Astrocyte of the cerebellum (primary cell): ENCODE measurements at regions of chrX and their contacts with region 1.

Region 1: GRCh38 chrX:16931371-16931770 is 15.1 kb upstream of the REPS2 start:
- DNase-seq: no peak
- H3K4me3 ChIP-seq: no peak overlapping the region
- CTCF ChIP-seq: no peak

Region 2: DNA sequence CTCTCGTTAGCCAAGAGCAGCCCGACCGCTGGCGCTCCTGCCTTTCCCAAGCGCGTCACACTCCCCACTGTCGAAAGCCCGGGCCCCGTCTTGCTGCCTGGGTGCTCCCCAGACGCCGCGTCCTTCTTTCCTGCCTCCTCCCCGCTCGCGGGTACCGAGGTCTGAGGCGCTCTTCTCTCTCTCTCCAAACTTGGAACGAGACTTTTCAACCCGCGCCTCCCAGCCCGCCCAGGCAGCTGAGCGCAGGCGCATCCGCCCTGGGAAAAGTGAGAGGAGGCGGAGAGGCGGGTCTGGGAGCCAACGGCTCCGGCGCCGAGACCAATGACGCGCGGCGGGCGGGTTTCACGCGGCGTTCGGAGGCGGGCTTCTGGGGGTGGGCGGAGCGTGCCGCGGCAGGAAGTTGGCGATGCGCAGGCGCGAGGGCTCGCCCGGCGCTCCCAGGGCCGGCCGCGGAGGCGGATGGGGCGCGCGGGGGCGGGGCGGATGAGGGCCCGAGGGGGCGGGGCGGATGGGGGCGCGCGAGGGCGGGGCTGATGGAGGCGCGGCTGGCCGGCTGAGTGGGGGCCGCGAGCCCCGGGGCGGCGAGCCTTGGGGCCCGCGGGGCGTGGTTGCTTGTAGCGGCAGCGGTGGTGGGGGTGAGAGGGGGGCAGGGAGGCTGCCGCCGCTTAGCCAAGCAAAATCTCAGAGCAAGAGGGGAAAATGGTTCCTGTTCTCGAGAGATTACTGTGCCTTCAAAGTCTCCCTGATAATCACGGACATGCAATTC is 61.1 kb before region 1 on chrX and contains the start of gene RBBP7:
- in situ Hi-C with region 1: no loop called
- DNase-seq: peak; percentile 80
- H3K4me3 ChIP-seq: peak within 1 kb of the TSS; percentile 74
- CTCF ChIP-seq: no peak

Region 3: DNA sequence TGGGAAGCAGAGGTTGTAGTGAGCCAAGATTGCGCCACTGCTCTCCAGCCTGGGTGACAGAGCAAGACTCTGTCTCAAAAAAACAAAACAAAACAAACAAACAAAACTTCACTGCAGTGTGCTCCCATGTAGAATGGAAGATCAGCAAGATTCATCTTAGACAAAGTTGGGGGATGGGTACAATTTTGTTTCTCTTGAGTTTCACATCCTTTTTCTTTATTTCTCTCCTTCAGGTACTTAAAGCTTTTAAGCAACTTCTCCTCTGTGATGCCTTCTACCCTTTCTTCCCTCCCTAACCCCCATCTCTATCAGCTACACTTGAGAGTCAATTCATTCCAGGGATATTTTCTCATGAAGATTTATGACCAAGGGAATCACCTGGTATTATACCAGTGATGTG is 45.7 kb before region 1 on chrX:
- in situ Hi-C with region 1: loop called (anchors 5 kb)
- DNase-seq: no peak
- H3K4me3 ChIP-seq: no peak overlapping the region
- CTCF ChIP-seq: no peak

Region 4: DNA sequence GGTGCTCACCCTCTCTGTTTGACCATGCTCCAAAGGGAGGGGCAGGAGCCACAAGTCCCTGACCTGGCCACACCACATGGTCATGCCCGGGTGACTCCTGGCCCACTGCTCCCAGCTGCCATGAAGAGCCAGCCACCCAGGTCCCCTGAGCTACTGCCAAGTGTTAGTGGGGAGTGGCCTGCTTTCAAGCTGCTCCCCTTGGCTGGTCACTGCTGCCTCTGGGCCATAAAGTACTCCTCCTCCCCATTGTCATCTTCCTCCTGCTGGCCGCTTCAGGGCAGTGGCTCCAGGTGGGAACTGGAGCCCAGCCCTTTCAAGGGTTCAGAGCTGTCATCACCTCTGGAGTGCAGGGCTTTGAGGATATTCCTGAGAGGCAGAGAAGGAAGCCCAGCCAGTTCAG is 33.9 kb before region 1 on chrX:
- in situ Hi-C with region 1: no loop called
- DNase-seq: no peak
- H3K4me3 ChIP-seq: no peak overlapping the region
- CTCF ChIP-seq: no peak

Region 5: DNA sequence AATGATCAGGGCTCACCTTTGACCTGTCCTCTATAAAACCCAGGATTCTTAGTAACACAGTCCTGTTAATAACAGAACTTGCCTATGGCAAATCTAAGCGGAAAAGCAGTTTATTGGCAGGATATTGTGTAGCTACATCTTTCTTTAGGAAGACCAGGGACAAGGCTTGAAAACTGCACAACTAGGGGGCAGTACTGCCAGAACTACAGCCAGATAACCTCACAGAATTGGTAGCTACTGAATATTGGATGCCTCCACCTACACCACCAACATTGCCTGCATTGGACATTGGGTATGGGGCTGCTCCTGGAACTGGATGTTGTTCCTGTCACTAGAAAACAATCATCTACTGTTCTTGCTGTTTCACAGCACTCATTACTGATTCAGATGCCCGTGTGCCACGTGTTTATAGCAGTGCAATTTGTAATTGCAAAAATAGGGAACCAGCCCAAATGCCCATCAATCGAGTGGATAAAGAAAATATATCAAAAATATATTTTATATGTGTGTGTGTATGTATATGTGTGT is 62.5 kb after region 1 on chrX:
- in situ Hi-C with region 1: no loop called
- DNase-seq: no peak
- H3K4me3 ChIP-seq: no peak overlapping the region
- CTCF ChIP-seq: no peak